Right cardiac atrium (tissue), 5 donors: ENCODE measurements at regions of chr12 and their contacts with region 1.

Region 1: DNA sequence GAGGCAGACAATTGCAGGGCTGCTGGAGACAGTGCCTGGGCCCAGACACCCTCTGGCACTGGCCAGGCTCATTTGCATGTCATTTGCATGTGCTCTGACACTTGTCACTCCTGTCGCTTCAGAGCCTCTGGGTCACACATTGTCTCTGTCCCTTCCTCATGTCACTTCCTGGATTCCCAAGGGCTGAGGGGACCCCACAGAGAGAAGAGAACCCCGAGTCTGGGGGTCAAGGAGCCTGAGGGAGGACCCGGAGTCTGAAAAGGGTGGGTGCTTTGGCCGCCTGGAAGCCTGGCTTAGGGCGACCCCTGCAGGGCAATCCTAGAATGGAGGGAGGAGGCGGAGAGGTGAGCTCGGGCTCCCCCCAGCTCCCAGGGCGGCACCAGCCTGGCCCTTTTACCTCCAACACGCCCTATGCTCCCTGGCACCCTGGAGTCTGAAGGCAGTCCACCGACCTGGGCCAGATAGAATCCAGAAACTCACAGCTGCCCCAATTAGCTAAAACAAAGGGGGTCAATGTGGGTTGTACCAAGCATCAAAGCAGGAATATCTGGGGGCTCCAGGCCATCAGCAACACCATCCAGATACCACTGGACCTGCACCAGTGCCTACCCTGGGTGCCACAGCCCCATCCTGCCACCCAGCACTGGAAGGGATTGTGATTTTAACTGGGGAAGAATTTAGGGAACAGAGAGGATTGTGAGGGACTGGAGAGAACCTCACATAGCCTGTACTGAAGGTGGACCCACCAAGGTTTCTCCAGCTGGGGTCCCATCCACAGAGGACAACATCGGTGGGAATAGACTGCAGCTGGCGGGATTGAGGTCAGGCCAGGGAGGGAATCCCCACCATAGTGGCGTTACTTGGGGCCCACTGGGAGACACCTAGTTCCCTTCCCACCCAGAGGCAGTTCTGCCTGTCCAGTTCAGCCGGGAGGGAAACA is 21.8 kb upstream of the KRT78 start:
- DNase-seq: peak; percentile 58 to 84 (median 83)
- ATAC-seq: peak in 1 of 2 donors; percentile 22
- H3K4me3 ChIP-seq: no peak overlapping the region
- H3K27ac ChIP-seq: no peak overlapping the region
- H3K4me1 ChIP-seq: peaks cover 6% of the 10 kb centered on the region
- H3K27me3 ChIP-seq: no peaks in the 10 kb centered on the region

Region 2: GRCh38 chr12:52378091-52378490 is 492.5 kb before region 1 on chr12:
- intact Hi-C with region 1: loop called in 3 of 4 experiments (anchors 5 kb)
- DNase-seq: no peak
- ATAC-seq: no peak
- H3K4me3 ChIP-seq: no peak overlapping the region
- H3K27ac ChIP-seq: no peak overlapping the region
- H3K4me1 ChIP-seq: no peaks in the 10 kb centered on the region
- H3K27me3 ChIP-seq: no peaks in the 10 kb centered on the region